ENCODE measurements at regions of chr1 and their contacts with region 1.

Region 1: DNA sequence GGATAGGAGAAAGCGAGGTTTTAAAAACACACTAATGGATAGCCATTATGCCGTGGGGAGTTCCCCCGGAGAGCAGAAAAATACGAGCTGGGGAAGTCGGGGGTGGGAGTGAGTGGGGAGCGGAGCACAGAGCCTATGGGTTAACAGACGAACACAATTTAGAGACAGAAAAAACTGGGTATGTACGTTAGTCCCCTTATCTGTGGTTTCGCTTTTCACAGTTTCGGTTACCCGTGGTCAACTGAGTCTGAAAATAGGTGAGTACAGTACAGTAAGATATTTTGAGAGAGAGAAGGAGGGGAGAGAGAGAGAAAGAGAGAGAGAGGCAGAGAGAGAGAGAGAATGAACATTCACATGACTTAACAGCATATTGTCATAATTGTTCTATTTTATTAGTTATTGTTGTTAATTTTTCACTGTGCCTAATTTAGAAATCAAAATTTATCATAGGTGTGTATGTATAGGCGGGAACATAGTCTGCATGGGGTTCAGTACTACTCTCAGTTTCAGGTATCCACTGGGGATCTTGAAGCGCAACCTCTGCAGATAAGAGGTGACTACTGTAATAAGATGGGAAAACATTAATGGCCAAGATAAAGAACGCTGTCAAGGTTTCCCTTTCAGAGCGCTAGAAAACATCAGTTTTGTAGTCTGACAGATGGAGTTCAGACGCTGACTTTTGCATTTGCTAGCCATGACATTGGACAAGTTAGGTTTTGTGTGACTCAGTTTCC is 125.6 kb upstream of the LMO4 start:
- DNase-seq: no peak
- ATAC-seq: no peak
- H3K4me3 ChIP-seq: no peak overlapping the region
- H3K4me3 Mint-ChIP-seq: peak overlapping the region in 1 of 3 donors; percentile 46
- H3K27ac ChIP-seq: no peak overlapping the region
- H3K27ac Mint-ChIP-seq: no peak overlapping the region
- H3K4me1 ChIP-seq: no peaks in the 10 kb centered on the region
- H3K4me1 Mint-ChIP-seq: peaks cover 7 to 12% (median 9%) of the 10 kb centered on the region in 3 donors
- H3K27me3 ChIP-seq: peaks cover 0 to 16% of the 10 kb centered on the region in 2 experiments
- H3K27me3 Mint-ChIP-seq: peaks cover 30 to 47% of the 10 kb centered on the region in 2 donors

Region 2: DNA sequence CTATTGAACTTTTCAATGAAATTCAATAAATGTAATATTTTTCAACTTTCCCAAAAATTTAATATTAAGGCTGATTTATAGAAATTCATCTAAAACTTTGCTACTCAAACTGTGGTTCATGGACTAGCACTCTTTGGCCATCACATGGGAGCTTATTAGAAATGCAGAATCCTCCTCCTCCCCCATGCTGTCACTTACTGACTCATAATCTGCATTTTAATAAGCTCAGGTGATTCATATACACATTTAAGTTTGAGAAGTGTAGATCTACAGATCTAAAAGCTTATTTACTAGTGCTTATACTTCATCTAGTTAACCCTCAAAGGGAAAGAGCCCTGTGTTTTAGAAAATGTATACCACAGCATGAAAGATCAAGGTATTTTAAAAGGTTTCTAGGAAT is 204.4 kb before region 1 on chr1:
- CTCF ChIA-PET with region 1: no interaction called
- POLR2A ChIA-PET with region 1: no interaction called
- DNase-seq: no peak
- ATAC-seq: no peak
- H3K4me3 ChIP-seq: no peak overlapping the region
- H3K4me3 Mint-ChIP-seq: no peak overlapping the region
- H3K27ac ChIP-seq: no peak overlapping the region
- H3K27ac Mint-ChIP-seq: no peak overlapping the region
- H3K4me1 ChIP-seq: no peaks in the 10 kb centered on the region
- H3K4me1 Mint-ChIP-seq: peaks cover 0 to 14% (median 5%) of the 10 kb centered on the region in 3 donors
- H3K27me3 ChIP-seq: no peaks in the 10 kb centered on the region
- H3K27me3 Mint-ChIP-seq: no peaks in the 10 kb centered on the region

Region 3: DNA sequence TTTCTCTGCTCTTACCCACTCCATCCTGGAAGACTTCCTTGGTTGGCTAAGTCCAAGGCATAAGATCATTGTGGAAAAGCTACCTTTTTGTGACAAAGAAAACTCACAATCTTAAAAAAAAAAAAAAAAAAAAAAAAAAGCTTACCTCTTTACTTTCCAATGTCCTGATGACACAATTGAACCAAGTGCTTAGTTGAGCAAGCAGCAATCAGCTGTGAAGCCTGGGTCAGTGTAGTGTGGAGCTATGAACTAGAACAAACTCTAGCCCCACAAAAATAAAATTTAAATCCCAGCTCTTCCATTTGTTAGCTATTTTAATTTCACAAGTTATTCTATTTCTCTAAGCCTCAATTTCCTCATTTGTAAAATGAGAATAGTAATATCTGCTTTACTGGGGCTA is 773.2 kb after region 1 on chr1:
- CTCF ChIA-PET with region 1: interaction called in 1 of 2 experiments, 12 read pairs
- POLR2A ChIA-PET with region 1: no interaction called
- DNase-seq: no peak
- ATAC-seq: no peak
- H3K4me3 ChIP-seq: no peak overlapping the region
- H3K4me3 Mint-ChIP-seq: no peak overlapping the region
- H3K27ac ChIP-seq: no peak overlapping the region
- H3K27ac Mint-ChIP-seq: no peak overlapping the region
- H3K4me1 ChIP-seq: no peaks in the 10 kb centered on the region
- H3K4me1 Mint-ChIP-seq: no peaks in the 10 kb centered on the region
- H3K27me3 ChIP-seq: no peaks in the 10 kb centered on the region
- H3K27me3 Mint-ChIP-seq: peaks cover 9 to 10% of the 10 kb centered on the region in 2 donors

Measured in T-cell (primary cell).